CD8-positive, alpha-beta T cell (primary cell): ENCODE measurements at regions of chr14 and their contacts with region 1.

Region 1: DNA sequence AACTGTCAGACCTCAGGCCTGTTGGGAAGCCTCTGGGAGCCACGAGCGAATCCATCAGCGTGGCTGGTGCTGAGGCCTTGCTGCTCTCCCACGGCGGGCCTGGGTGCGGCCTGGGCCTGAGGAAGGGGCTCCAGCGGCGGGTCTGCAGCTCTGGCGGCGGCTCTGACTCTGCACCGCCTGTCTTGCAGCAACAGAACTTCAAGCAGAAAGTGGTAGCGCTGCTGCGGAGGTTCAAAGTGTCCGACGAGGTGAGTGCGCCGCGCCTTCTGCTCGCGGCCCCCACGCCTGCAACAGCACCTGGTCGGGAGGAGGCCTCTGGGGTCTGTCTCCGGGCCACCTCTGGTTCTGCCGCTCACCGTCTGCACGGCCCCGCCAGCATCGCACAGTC is 28.7 kb upstream of the TEX22 start:
- DNase-seq: no peak
- ATAC-seq: no peak
- H3K4me3 ChIP-seq: no peak overlapping the region
- H3K4me3 Mint-ChIP-seq: no peak overlapping the region
- H3K27ac ChIP-seq: no peak overlapping the region
- H3K27ac Mint-ChIP-seq: no peak overlapping the region
- H3K4me1 ChIP-seq: peaks cover 14% of the 10 kb centered on the region
- H3K4me1 Mint-ChIP-seq: peaks cover 7% of the 10 kb centered on the region
- H3K27me3 ChIP-seq: no peaks in the 10 kb centered on the region
- H3K27me3 Mint-ChIP-seq: no peaks in the 10 kb centered on the region
- CTCF ChIP-seq: no peak

Region 2: GRCh38 chr14:105381446-105382342 is 12.0 kb after region 1 on chr14:
- CTCF ChIA-PET with region 1: interaction called, 13 read pairs
- POLR2A ChIA-PET with region 1: interaction called, 3 read pairs
- intact Hi-C with region 1: no loop called
- DNase-seq: no peak
- ATAC-seq: no peak
- H3K4me3 ChIP-seq: no peak overlapping the region
- H3K4me3 Mint-ChIP-seq: no peak overlapping the region
- H3K27ac ChIP-seq: no peak overlapping the region
- H3K27ac Mint-ChIP-seq: no peak overlapping the region
- H3K4me1 ChIP-seq: no peaks in the 10 kb centered on the region
- H3K4me1 Mint-ChIP-seq: no peaks in the 10 kb centered on the region
- H3K27me3 ChIP-seq: peaks cover 0 to under 1% of the 10 kb centered on the region in 2 experiments
- H3K27me3 Mint-ChIP-seq: no peaks in the 10 kb centered on the region
- CTCF ChIP-seq: no peak

Region 3: DNA sequence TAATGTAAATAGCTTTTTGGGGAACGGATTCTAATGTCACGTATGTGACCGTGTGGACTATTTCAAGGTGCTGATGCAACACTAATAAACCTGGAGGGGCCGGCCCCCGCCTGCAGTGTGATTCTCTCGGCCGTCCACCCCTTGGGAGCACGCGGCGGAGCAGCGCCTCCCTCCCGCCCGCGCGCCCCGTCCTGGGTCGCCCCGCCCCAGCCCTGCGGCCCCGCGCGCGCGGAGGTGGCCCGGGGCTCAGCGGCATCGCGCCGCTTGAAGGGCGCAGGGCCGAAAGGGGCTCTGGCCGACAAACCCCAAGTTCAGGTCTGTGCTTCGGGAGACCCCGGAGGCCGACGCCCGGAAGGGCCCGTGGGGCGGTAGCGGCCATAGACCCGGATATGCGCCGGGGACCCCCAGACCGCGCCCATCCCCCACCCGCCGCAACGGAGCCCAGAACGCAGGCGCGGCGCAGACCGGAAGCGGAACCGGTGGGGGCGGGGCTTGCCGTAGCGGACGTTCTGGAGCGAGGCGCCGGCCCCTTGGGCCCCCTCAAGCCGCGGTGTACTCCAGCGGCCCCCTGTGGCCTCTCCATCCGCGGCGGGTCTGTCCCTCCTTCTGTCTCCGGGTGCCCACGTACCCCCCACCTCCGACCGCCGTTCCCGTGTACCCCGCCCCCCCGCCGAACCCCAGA is 28.5 kb after region 1 on chr14 and contains the start of gene TEX22:
- CTCF ChIA-PET with region 1: interaction called, 12 read pairs
- POLR2A ChIA-PET with region 1: interaction called, 3 read pairs
- intact Hi-C with region 1: loop called (anchors 1 to 2 kb)
- DNase-seq: peak; percentile 73 to 97 (median 90)
- ATAC-seq: peak; percentile 90
- H3K4me3 ChIP-seq: peak within 1 kb of the TSS; percentile 63 to 76
- H3K4me3 Mint-ChIP-seq: peak within 1 kb of the TSS; percentile 79
- H3K27ac ChIP-seq: peak within 1 kb of the TSS; percentile 71
- H3K27ac Mint-ChIP-seq: peak within 1 kb of the TSS; percentile 78
- H3K4me1 ChIP-seq: peaks cover 22% of the 10 kb centered on the region
- H3K4me1 Mint-ChIP-seq: peaks cover 15% of the 10 kb centered on the region
- H3K27me3 ChIP-seq: no peaks in the 10 kb centered on the region
- H3K27me3 Mint-ChIP-seq: no peaks in the 10 kb centered on the region
- CTCF ChIP-seq: no peak
- total RNA-seq, gene TEX22: 1.1 TPM in 1 of 2 experiments, not detected in the other

Region 4: DNA sequence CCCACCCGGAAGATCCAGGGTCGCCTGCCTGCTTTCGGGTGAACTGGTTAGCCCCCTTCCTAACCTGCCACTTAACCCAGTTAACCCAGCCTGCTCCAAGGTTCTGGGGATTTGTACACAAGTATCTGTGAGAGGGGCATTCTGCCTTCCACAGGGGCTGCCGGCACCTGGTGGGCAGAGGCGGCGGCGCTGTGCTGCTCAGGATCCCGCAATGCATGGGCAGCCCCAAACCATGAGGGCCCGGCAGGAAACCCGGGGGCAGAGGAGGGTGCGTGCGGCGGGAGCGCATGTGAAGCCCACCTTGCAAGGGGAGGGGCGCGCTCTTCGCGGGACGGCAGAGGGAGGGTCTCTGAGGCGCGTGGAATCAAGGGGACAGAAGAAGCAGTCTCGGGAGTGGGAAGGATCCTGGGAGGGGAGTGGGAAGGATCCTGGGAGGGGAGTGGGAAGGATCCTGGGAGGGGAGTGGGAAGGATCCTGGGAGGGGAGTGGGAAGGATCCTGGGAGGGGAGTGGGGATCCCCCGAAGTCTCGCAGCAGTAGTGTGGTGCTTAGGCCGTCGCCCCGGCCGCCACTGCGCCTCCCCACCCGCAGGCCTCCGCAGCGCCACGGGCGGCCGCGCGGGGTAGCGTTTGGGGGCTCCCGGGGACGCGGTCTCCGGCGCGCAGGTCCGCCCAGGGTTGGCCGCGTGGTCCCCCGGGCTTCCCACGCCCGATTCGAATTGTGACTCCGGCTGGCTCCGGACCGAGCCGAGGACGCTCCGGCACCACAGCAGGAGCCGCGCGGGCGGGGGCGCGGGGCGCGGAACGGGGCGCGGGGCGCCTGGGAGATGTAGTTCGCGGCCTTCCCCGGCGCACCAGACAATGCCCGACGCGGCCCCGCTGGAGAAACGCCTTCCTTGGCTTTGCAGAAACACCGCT is 45.1 kb after region 1 on chr14:
- CTCF ChIA-PET with region 1: interaction called, 5 read pairs
- POLR2A ChIA-PET with region 1: no interaction called
- intact Hi-C with region 1: loop called (anchors 2 kb)
- DNase-seq: peak; percentile 27 to 79 (median 57)
- ATAC-seq: peak; percentile 82
- H3K4me3 ChIP-seq: peak overlapping the region; percentile 24 to 69
- H3K4me3 Mint-ChIP-seq: peak overlapping the region; percentile 80
- H3K27ac ChIP-seq: no peak overlapping the region
- H3K27ac Mint-ChIP-seq: no peak overlapping the region
- H3K4me1 ChIP-seq: peaks cover 26% of the 10 kb centered on the region
- H3K4me1 Mint-ChIP-seq: peaks cover 14% of the 10 kb centered on the region
- H3K27me3 ChIP-seq: peaks cover 4 to 12% of the 10 kb centered on the region in 2 experiments
- H3K27me3 Mint-ChIP-seq: peaks cover 9% of the 10 kb centered on the region
- CTCF ChIP-seq: peak; percentile 92

Region 5: GRCh38 chr14:105460616-105461015 is 91.0 kb after region 1 on chr14:
- CTCF ChIA-PET with region 1: no interaction called
- POLR2A ChIA-PET with region 1: no interaction called
- intact Hi-C with region 1: no loop called
- DNase-seq: no peak
- ATAC-seq: no peak
- H3K4me3 ChIP-seq: no peak overlapping the region
- H3K4me3 Mint-ChIP-seq: no peak overlapping the region
- H3K27ac ChIP-seq: no peak overlapping the region
- H3K27ac Mint-ChIP-seq: no peak overlapping the region
- H3K4me1 ChIP-seq: no peaks in the 10 kb centered on the region
- H3K4me1 Mint-ChIP-seq: no peaks in the 10 kb centered on the region
- H3K27me3 ChIP-seq: no peaks in the 10 kb centered on the region
- H3K27me3 Mint-ChIP-seq: no peaks in the 10 kb centered on the region
- CTCF ChIP-seq: no peak

Region 6: GRCh38 chr14:105527661-105528581 is 158.3 kb after region 1 on chr14:
- CTCF ChIA-PET with region 1: interaction called, 24 read pairs
- POLR2A ChIA-PET with region 1: no interaction called
- intact Hi-C with region 1: loop called (anchors 1 kb)
- DNase-seq: peak; percentile 66 to 89 (median 79)
- ATAC-seq: peak; percentile 69
- H3K4me3 ChIP-seq: peak overlapping the region; percentile 38 to 66
- H3K4me3 Mint-ChIP-seq: peak overlapping the region; percentile 75
- H3K27ac ChIP-seq: no peak overlapping the region
- H3K27ac Mint-ChIP-seq: no peak overlapping the region
- H3K4me1 ChIP-seq: peaks cover 32% of the 10 kb centered on the region
- H3K4me1 Mint-ChIP-seq: peaks cover 18% of the 10 kb centered on the region
- H3K27me3 ChIP-seq: peaks cover 4 to 24% of the 10 kb centered on the region in 2 experiments
- H3K27me3 Mint-ChIP-seq: peaks cover 7% of the 10 kb centered on the region
- CTCF ChIP-seq: peak; percentile 73